A673 (cell line): ENCODE measurements at regions of chr10 and their contacts with region 1.

Region 1: GRCh38 chr10:124388823-124389612 is 29.7 kb downstream of the OAT start:
- DNase-seq: peak; percentile 89
- H3K4me3 ChIP-seq: peak overlapping the region; percentile 41
- H3K27ac ChIP-seq: no peak overlapping the region
- H3K4me1 ChIP-seq: peaks cover 6% of the 10 kb centered on the region
- H3K27me3 ChIP-seq: no peaks in the 10 kb centered on the region
- CTCF ChIP-seq: peak; percentile 83

Region 2: DNA sequence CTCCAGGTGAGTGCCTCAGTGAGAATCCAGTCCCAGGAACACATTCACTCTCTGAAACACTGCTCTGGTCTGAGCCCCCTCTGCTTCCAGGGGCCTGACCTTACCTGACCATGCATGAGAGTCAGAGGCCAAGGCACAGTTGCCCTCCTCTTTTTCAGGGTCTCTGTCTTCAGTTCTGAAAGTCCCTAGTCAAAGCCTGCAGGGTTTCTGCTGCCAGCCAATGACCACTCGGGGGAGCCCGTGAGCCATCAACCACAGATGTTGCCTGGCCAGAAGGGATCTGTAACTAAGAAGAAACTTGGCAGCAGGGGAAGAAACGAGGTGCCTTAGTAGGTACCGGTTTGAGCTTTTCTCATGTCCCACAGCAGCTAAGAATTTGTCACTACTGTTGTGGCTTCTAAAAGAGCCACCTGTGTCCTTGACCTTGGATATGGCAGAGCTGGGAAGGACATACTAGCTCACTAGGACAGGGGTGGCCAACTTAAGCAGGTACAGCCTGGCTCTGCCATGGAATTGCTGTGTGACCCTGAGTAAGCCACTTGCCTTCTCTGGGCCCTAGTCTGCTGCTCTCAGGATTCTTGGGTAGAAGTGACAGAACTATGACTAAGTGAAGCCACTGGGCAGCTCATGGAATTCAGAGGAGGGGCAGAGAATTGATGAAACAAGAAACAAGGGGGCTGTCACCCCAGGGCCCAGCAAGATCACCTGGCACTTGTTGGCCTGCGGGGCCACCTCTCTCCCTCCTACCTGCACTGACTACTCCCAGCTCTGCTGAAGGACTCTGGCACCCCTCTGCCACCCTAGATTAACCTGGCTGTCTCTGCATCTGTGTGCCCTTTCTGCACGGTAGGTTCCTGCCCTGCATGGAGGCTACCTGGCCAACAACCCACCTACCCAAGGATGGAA is 806.7 kb before region 1 on chr10:
- CTCF ChIA-PET with region 1: no interaction called
- POLR2A ChIA-PET with region 1: no interaction called
- intact Hi-C with region 1: loop called (anchors 2 kb)
- DNase-seq: peak; percentile 76
- H3K4me3 ChIP-seq: no peak overlapping the region
- H3K27ac ChIP-seq: no peak overlapping the region
- H3K4me1 ChIP-seq: no peaks in the 10 kb centered on the region
- H3K27me3 ChIP-seq: peaks cover 63% of the 10 kb centered on the region
- CTCF ChIP-seq: peak; percentile 88

Region 3: DNA sequence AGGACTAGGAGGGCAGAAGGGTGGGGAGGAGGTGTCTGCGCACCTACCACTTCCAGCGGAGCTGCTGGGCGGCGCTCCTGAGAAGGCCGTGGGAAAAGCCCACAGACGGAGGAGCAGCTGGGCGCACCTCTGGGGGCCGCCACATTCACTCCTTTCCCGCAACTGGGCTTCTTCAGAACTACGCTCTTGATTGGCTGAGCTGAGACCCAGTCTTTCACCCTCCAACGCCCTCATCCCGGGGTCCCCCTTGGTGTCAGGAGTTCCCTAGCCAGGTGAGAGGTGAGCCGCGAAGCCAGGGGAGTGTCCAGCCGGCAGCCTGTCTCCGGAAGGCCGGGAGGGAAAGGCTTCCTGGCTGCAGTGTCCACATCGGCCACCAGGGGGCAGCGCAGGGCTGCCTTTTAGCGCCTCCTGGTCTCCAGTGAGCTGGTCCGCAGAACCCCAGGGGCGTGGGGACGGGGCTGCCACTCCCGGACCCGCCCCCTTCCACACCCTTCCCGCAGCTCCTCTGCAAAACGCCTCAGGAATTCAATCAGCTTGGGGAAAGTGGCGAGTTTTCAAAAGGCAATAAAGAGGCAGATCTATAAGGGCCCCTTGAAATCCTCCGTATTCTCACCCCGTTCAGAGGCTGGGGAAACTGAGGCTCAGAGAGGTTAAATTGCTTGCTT is 394.5 kb before region 1 on chr10:
- CTCF ChIA-PET with region 1: interaction called, 57 read pairs
- POLR2A ChIA-PET with region 1: no interaction called
- intact Hi-C with region 1: loop called (anchors 1 kb)
- DNase-seq: peak; percentile 80
- H3K4me3 ChIP-seq: peak overlapping the region; percentile 9
- H3K27ac ChIP-seq: no peak overlapping the region
- H3K4me1 ChIP-seq: no peaks in the 10 kb centered on the region
- H3K27me3 ChIP-seq: peaks cover 44% of the 10 kb centered on the region
- CTCF ChIP-seq: peak; percentile 95

Region 4: DNA sequence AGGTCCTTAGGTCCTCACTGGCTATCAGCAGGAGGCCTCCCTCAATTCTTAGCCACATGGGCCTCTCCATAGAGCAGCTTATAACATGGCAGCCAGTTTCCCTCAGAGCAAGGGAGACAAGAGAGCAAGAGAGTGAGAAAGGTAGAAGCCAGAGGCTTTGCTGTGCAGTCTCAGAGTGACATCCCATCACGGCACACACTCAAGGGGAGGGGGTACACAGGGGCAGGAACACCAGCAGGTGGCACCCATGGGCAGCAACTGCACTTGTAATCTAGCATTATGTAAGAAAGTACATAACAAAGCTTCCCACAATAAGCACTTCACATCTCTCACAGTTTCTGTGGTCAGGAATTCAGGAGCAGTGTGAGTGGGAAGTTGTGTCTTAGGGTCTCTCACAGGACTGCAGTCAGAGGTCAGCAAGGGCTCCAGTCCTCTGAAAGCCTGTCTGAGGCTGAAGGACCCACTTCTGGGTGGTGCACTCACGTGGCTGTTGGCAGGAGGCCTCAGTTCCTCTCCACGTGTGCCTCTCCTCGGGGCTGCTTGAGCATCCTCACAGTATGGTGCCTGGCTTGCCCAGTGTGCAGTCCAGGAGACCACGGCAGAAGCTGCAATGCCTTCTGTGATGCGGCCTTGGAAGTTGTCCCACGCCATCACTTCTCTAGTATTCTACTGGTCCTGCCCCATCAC is 129.7 kb before region 1 on chr10:
- CTCF ChIA-PET with region 1: interaction called, 5 read pairs
- POLR2A ChIA-PET with region 1: no interaction called
- intact Hi-C with region 1: loop called (anchors 1 kb)
- DNase-seq: peak; percentile 47
- H3K4me3 ChIP-seq: no peak overlapping the region
- H3K27ac ChIP-seq: no peak overlapping the region
- H3K4me1 ChIP-seq: no peaks in the 10 kb centered on the region
- H3K27me3 ChIP-seq: no peaks in the 10 kb centered on the region
- CTCF ChIP-seq: peak; percentile 64

Region 5: DNA sequence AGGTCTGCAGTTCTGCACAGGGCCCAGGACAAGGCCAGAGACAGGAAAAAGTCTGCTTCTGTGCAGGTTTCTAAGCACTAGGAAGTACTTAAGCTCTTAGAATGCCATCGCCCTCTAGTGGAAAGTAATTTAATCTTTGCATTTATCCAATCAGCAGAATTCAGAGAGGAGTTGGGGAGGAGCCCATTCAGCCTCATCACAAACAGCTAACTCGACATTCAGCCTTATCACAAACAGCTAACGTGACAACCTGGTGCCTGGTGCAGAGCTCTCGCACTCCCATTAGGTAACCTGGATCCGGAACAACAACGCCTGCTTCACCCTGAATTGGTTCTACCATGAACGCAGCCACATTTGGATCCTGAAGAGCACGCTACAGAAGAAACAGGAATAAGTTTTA is 14.5 kb after region 1 on chr10:
- CTCF ChIA-PET with region 1: interaction called, 12 read pairs
- POLR2A ChIA-PET with region 1: no interaction called
- intact Hi-C with region 1: no loop called
- DNase-seq: peak; percentile 88
- H3K4me3 ChIP-seq: no peak overlapping the region
- H3K27ac ChIP-seq: no peak overlapping the region
- H3K4me1 ChIP-seq: no peaks in the 10 kb centered on the region
- H3K27me3 ChIP-seq: no peaks in the 10 kb centered on the region
- CTCF ChIP-seq: peak; percentile 70